ENCODE measurements at regions of chr2 and their contacts with region 1.

Region 1: DNA sequence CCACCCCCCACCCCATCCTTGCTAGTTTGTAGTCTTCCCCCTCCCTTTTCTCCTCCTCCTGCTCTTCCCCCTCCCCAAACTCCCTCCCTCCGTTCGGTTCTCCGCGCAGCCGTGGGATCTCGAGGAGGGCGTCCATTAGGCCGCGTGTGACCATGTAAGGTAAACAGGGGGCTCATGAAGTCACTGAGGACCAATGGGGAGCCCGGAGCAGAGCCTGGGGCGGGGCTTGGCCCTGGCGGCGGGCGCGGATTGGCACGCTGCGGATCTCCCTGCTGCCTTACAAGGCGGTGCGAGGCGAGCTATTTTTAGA is 246 bp upstream of the KLF7 start:
- DNase-seq: peak; percentile 98
- ATAC-seq: peak; percentile 87
- H3K4me3 ChIP-seq: peak overlapping the region in 4 of 5 experiments; percentile 81 to 97 (median 85)
- H3K4me3 Mint-ChIP-seq: peak overlapping the region; percentile 98
- H3K27ac ChIP-seq: peak overlapping the region; percentile 95 to 99
- H3K27ac Mint-ChIP-seq: peak overlapping the region; percentile 99
- H3K4me1 ChIP-seq: peaks cover 42 to 45% of the 10 kb centered on the region in 2 donors
- H3K4me1 Mint-ChIP-seq: peaks cover 54% of the 10 kb centered on the region
- H3K27me3 ChIP-seq: no peaks in the 10 kb centered on the region
- H3K27me3 Mint-ChIP-seq: no peaks in the 10 kb centered on the region
- CTCF ChIP-seq: no peak

Region 2: GRCh38 chr2:206249714-206250591 is 916.0 kb before region 1 on chr2:
- CTCF ChIA-PET with region 1: no interaction called
- POLR2A ChIA-PET with region 1: no interaction called
- intact Hi-C with region 1: loop called (anchors 10 kb)
- DNase-seq: peak; percentile 38
- ATAC-seq: no peak
- H3K4me3 ChIP-seq: peak overlapping the region; percentile 16 to 43 (median 39)
- H3K4me3 Mint-ChIP-seq: peak overlapping the region; percentile 85
- H3K27ac ChIP-seq: no peak overlapping the region
- H3K27ac Mint-ChIP-seq: peak overlapping the region; percentile 5
- H3K4me1 ChIP-seq: peaks cover 12 to 30% of the 10 kb centered on the region in 2 donors
- H3K4me1 Mint-ChIP-seq: peaks cover 26% of the 10 kb centered on the region
- H3K27me3 ChIP-seq: peaks cover 0 to 37% (median 26%) of the 10 kb centered on the region in 4 experiments
- H3K27me3 Mint-ChIP-seq: peaks cover 38% of the 10 kb centered on the region
- CTCF ChIP-seq: no peak

Region 3: DNA sequence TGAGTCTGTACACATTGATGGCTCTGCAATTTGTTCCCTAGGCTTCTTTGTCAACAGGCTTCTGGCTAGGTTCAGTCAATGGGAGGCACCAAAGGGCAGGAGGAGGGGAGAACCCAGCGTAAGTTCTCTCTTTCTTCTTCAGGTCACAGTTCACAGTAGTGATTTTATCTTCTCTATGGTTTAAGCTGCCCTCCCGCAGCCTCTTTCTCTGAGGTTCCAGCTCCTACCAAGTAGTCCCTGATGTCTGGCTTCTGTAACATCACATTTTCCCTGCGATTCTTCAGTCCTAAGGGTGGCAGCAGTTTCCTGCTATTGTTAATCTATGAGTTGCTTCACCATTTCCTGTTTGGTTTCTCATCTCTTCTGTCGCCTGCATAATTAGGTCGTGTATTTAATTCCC is 119.3 kb before region 1 on chr2:
- CTCF ChIA-PET with region 1: interaction called, 11 read pairs
- POLR2A ChIA-PET with region 1: interaction called, 3 read pairs
- intact Hi-C with region 1: no loop called
- DNase-seq: peak; percentile 59
- ATAC-seq: peak; percentile 57
- H3K4me3 ChIP-seq: no peak overlapping the region
- H3K4me3 Mint-ChIP-seq: no peak overlapping the region
- H3K27ac ChIP-seq: no peak overlapping the region
- H3K27ac Mint-ChIP-seq: no peak overlapping the region
- H3K4me1 ChIP-seq: peaks cover 6% of the 10 kb centered on the region in 2 donors
- H3K4me1 Mint-ChIP-seq: peaks cover 6% of the 10 kb centered on the region
- H3K27me3 ChIP-seq: peaks cover 0 to 4% (median 0%) of the 10 kb centered on the region in 4 experiments
- H3K27me3 Mint-ChIP-seq: peaks cover 4% of the 10 kb centered on the region
- CTCF ChIP-seq: no peak

Region 4: GRCh38 chr2:207143215-207144172 is 22.5 kb before region 1 on chr2:
- CTCF ChIA-PET with region 1: interaction called, 92 read pairs
- POLR2A ChIA-PET with region 1: interaction called, 122 read pairs
- intact Hi-C with region 1: loop called (anchors 1 kb)
- DNase-seq: peak; percentile 86
- ATAC-seq: peak; percentile 77
- H3K4me3 ChIP-seq: peak overlapping the region; percentile 43 to 71 (median 56)
- H3K4me3 Mint-ChIP-seq: peak overlapping the region; percentile 89
- H3K27ac ChIP-seq: peak overlapping the region; percentile 93 to 99
- H3K27ac Mint-ChIP-seq: peak overlapping the region; percentile 94
- H3K4me1 ChIP-seq: peaks cover 57 to 62% of the 10 kb centered on the region in 2 donors
- H3K4me1 Mint-ChIP-seq: peaks cover 68% of the 10 kb centered on the region
- H3K27me3 ChIP-seq: no peaks in the 10 kb centered on the region
- H3K27me3 Mint-ChIP-seq: no peaks in the 10 kb centered on the region
- CTCF ChIP-seq: no peak

Region 5: GRCh38 chr2:207334624-207335371 is 168.8 kb after region 1 on chr2:
- CTCF ChIA-PET with region 1: no interaction called
- POLR2A ChIA-PET with region 1: interaction called, 3 read pairs
- intact Hi-C with region 1: loop called (anchors 10 kb)
- DNase-seq: peak; percentile 22
- ATAC-seq: peak; percentile 39
- H3K4me3 ChIP-seq: peak overlapping the region in 2 of 5 experiments; percentile 1 to 45
- H3K4me3 Mint-ChIP-seq: peak overlapping the region; percentile 80
- H3K27ac ChIP-seq: no peak overlapping the region
- H3K27ac Mint-ChIP-seq: peak overlapping the region; percentile 2
- H3K4me1 ChIP-seq: peaks cover 5 to 13% of the 10 kb centered on the region in 2 donors
- H3K4me1 Mint-ChIP-seq: peaks cover 44% of the 10 kb centered on the region
- H3K27me3 ChIP-seq: no peaks in the 10 kb centered on the region
- H3K27me3 Mint-ChIP-seq: no peaks in the 10 kb centered on the region
- CTCF ChIP-seq: no peak

Region 6: GRCh38 chr2:208025037-208025813 is 859.2 kb after region 1 on chr2 and contains the start of gene PLEKHM3:
- CTCF ChIA-PET with region 1: no interaction called
- POLR2A ChIA-PET with region 1: interaction called, 4 read pairs
- intact Hi-C with region 1: loop called (anchors 5 kb)
- DNase-seq: peak; percentile 83
- ATAC-seq: peak; percentile 92
- H3K4me3 ChIP-seq: peak within 1 kb of the TSS; percentile 71 to 95 (median 92)
- H3K4me3 Mint-ChIP-seq: peak within 1 kb of the TSS; percentile 95
- H3K27ac ChIP-seq: peak within 1 kb of the TSS; percentile 57 to 84
- H3K27ac Mint-ChIP-seq: peak within 1 kb of the TSS; percentile 96
- H3K4me1 ChIP-seq: peaks cover 7 to 8% of the 10 kb centered on the region in 2 donors
- H3K4me1 Mint-ChIP-seq: peaks cover 25% of the 10 kb centered on the region
- H3K27me3 ChIP-seq: no peaks in the 10 kb centered on the region
- H3K27me3 Mint-ChIP-seq: no peaks in the 10 kb centered on the region
- CTCF ChIP-seq: no peak
- total RNA-seq, gene PLEKHM3: 17.7 and 19.5 TPM in 2 replicates